ENCODE measurements at regions of chr14 and their contacts with region 1.

Region 1: DNA sequence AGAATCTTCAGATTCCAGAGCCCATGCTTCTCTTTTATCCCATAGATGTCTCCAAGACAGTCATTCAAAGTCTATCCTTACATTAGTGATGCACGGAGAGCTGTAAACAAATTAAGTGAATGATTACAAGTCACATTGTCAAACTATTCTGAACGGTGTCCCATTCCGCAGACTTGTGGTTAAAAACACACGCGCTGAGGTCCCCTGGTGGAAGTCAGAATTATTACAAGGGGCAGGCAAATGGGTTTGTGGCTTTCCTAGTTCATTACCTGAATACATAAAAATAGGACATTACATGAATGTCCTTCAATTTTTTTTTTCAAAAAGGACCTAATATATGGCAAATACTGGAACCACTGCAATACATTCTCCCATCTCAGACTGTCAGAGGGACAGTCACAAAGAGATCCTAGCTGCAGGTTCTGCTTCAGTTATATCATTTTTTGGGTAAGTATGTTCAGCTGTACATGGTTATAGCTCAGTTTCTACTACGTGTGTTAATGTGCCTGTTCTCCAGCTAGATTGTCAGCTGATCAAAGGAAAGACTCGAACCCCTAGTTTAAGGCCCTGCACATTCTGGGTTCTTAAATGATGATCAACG is 53.1 kb upstream of the STON2 start:
- DNase-seq: peak; percentile 59 to 76
- H3K4me3 ChIP-seq: no peak overlapping the region
- H3K4me1 ChIP-seq: peaks cover 4% of the 10 kb centered on the region
- H3K27me3 ChIP-seq: no peaks in the 10 kb centered on the region

Region 2: GRCh38 chr14:81273521-81273920 is 179.7 kb before region 1 on chr14:
- in situ Hi-C with region 1: loop called (anchors 5 kb)
- DNase-seq: no peak
- H3K4me3 ChIP-seq: no peak overlapping the region
- H3K4me1 ChIP-seq: peaks cover 15% of the 10 kb centered on the region
- H3K27me3 ChIP-seq: no peaks in the 10 kb centered on the region

Region 3: DNA sequence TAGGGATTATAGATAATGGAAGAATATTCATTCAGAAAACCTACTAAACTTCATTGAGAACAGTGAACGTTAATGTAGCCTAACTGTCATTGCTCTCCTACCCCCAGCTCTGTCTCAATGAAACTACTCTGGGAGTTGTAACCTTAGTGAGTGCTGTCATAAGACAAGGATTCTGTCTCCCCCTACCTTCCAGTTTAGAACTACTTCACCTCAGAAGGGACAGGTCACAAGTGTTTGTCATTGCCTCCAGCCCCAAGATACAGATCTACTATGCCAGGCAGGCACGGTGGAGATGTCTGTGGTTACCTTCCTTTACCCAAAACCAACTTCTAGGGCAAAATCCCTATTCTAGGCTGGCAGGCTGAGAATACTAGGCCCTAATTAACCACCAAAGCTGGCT is 913.5 kb after region 1 on chr14:
- in situ Hi-C with region 1: no loop called
- DNase-seq: no peak
- H3K4me3 ChIP-seq: no peak overlapping the region
- H3K4me1 ChIP-seq: no peaks in the 10 kb centered on the region
- H3K27me3 ChIP-seq: no peaks in the 10 kb centered on the region

Measured in HAP-1 (cell line).